ENCODE measurements at regions of chr19 and their contacts with region 1.

Region 1: DNA sequence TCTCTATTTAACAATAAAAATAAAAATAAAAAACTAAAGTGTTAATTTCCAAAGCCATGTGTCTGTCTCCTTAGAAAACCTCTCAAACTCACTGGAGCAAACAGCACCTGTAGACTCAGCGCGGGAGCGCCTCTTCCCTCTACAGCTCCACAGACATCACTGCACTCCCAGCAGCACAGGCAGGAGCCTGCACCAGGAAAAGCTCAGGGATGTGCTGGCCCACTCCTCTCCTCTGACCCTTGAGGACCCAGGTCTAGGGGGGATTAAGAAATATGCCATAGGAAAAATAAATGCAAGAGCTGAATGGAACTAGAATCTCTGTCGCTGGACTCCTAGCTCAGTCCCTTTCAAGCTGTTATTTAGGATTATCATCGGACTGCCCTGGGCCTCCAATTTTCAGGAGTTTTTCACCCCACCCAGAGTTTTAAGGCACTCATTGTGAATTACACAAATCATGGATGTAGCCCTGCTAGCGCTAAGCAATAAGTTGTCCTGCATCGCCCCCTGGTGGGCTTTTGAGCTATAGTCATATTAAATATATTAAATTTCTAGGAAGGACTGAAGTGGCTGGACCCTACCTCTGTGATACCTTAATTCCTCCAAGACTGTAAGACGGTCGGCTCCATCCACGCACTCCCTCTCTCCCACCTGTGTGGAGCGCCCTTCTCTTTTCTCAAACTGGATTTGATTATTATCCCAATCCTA is 333.9 kb downstream of the UQCRFS1 start:
- DNase-seq: peak; percentile 35
- H3K4me3 Mint-ChIP-seq: no peak overlapping the region
- H3K27ac Mint-ChIP-seq: no peak overlapping the region
- H3K4me1 Mint-ChIP-seq: no peaks in the 10 kb centered on the region
- H3K27me3 Mint-ChIP-seq: no peaks in the 10 kb centered on the region
- CTCF ChIP-seq: peak; percentile 37

Region 2: GRCh38 chr19:27974082-27974513 is 904.9 kb before region 1 on chr19:
- CTCF ChIA-PET with region 1: no interaction called
- POLR2A ChIA-PET with region 1: no interaction called
- intact Hi-C with region 1: loop called (anchors 5 kb)
- DNase-seq: no peak
- H3K4me3 Mint-ChIP-seq: no peak overlapping the region
- H3K27ac Mint-ChIP-seq: no peak overlapping the region
- H3K4me1 Mint-ChIP-seq: no peaks in the 10 kb centered on the region
- H3K27me3 Mint-ChIP-seq: no peaks in the 10 kb centered on the region
- CTCF ChIP-seq: peak; percentile 16